Pancreas (tissue), 10 donors: ENCODE measurements at regions of chr5 and their contacts with region 1.

Region 1: GRCh38 chr5:83564069-83564749 is 92.7 kb downstream of the VCAN start:
- DNase-seq: no peak
- ATAC-seq: peak; percentile 77 to 88 (median 85)
- H3K4me3 ChIP-seq: no peak overlapping the region
- H3K27ac ChIP-seq: no peak overlapping the region
- H3K4me1 ChIP-seq: peaks cover 0 to 12% (median 9%) of the 10 kb centered on the region in 3 donors
- H3K27me3 ChIP-seq: no peaks in the 10 kb centered on the region
- CTCF ChIP-seq: peak; percentile 36 to 67 (median 58)

Region 2: GRCh38 chr5:82364497-82364896 is 1199.7 kb before region 1 on chr5:
- intact Hi-C with region 1: loop called in 1 of 3 experiments (anchors 10 kb)
- DNase-seq: no peak
- ATAC-seq: peak in 2 of 4 donors; percentile 67 to 68
- H3K4me3 ChIP-seq: no peak overlapping the region
- H3K27ac ChIP-seq: no peak overlapping the region
- H3K4me1 ChIP-seq: no peaks in the 10 kb centered on the region
- H3K27me3 ChIP-seq: no peaks in the 10 kb centered on the region
- CTCF ChIP-seq: no peak

Region 3: DNA sequence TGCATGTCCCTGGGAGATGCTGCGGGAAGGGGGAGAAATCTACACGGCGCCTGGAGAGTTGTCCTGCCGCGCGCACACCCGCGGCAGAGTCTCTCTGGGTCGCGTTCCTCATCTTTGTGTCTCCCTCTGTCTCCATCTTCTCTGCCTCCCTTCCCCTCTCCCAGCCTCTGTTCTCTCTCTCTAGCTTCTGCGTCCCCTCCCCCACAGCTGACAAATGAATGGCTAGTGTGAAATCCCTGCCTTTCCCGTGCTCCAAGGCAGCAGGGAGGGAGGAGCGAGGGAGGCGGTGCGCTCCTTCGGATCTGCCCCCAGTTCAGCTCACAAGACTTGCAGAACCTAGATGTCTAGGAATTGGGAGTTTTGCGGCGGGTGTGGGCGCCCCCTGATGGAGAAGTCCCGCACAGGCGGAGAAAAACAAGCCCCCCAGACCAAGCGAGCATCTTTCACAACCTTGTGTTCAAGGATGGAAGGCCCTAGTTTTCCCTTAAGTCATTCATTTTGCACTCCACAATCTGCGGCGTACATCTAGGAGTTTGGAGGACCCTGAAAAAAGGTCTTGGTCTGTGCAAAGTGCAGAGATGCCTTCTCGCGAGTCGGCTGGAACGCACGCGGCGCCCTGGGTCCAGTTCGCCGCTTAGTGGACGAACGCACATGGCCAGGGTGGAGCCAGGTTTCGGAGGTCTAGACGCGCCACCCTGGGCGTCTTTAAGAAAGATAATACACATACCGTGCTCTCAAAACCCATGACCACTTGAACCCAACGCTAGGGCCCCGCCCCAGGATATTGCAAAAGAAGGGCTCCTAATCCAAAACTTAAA is 90.7 kb before region 1 on chr5:
- intact Hi-C with region 1: no loop called
- DNase-seq: peak; percentile 67 to 84 (median 78)
- ATAC-seq: peak; percentile 82 to 87 (median 85)
- H3K4me3 ChIP-seq: peak overlapping the region; percentile 9 to 53 (median 30)
- H3K27ac ChIP-seq: peak overlapping the region in 2 of 4 donors; percentile 29 to 45
- H3K4me1 ChIP-seq: peaks cover 0 to 11% (median 7%) of the 10 kb centered on the region in 3 donors
- H3K27me3 ChIP-seq: peaks cover 0 to 28% (median under 1%) of the 10 kb centered on the region in 4 donors
- CTCF ChIP-seq: peak; percentile 58 to 72 (median 65)

Region 4: GRCh38 chr5:83777856-83778255 is 213.6 kb after region 1 on chr5:
- intact Hi-C with region 1: no loop called
- DNase-seq: no peak
- ATAC-seq: no peak
- H3K4me3 ChIP-seq: no peak overlapping the region
- H3K27ac ChIP-seq: no peak overlapping the region
- H3K4me1 ChIP-seq: no peaks in the 10 kb centered on the region
- H3K27me3 ChIP-seq: no peaks in the 10 kb centered on the region
- CTCF ChIP-seq: no peak